ENCODE measurements at regions of chr5 and their contacts with region 1.

Region 1: GRCh38 chr5:74035521-74035981 is 409.6 kb downstream of the ARHGEF28 start:
- DNase-seq: no peak

Region 2: GRCh38 chr5:73962801-73963425 is 72.6 kb before region 1 on chr5:
- intact Hi-C with region 1: no loop called
- DNase-seq: no peak

Region 3: GRCh38 chr5:74394916-74395781 is 359.6 kb after region 1 on chr5:
- intact Hi-C with region 1: loop called (anchors 10 kb)
- DNase-seq: no peak

Measured in cardiac septum (tissue), 1 donor.